Prostate gland (tissue), 2 donors: ENCODE measurements at regions of chr15 and their contacts with region 1.

Region 1: DNA sequence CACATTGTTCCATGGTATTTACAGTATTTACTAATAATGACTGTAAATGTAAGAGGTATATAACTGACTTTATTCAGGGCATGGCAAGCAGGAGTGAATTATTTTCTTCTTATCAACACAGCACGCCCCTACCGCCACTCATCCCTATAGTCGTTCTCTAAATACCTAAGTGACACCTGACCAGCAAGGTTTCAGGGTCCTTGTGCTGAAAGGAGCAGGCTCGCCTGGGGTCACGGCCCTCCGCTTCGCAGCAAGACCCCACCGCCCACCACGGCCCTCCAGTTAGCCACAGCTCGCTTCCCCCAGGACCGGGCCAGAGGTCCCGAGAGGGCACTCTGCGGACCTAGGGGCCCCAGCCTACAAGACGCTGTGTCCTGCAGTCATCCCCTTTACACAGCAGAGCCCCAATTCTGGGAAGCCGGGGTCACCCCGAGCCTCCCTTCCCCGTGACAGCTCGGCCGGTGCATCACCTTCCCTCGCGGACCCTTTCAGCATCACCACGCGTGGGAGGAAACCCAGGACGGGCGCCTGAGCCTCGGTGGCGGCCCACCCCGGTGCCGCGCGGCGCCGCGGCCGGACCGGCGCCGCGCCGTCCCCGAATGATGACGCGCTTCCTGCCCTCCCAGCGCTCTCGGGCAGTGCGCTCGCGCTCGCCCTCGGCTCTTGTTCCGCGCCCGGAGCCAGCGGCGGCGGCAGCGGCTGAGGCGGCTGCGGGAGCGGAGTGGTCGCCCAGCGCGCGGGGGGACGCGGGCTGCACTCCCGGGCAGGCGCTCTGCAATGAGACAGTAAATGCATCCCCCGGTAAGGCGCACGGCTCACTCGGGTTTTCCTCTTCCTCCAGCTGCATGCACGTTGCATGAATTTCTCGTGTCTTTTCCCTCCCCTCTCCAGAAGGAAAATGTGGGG is 225.1 kb upstream of the C2CD4B start:
- DNase-seq: peak; percentile 54
- H3K4me3 ChIP-seq: peak within 1 kb of the TSS; percentile 85 to 92
- H3K27ac ChIP-seq: peak within 1 kb of the TSS; percentile 69 to 70
- H3K4me1 ChIP-seq: no peaks in the 10 kb centered on the region
- H3K27me3 ChIP-seq: no peaks in the 10 kb centered on the region
- CTCF ChIP-seq: peak in 1 of 4 experiments; percentile 13
- POLR2A ChIP-seq: peak; percentile 41

Region 2: GRCh38 chr15:62649793-62650420 is 259.8 kb after region 1 on chr15:
- intact Hi-C with region 1: loop called (anchors 5 kb)
- DNase-seq: no peak
- H3K4me3 ChIP-seq: no peak overlapping the region
- H3K27ac ChIP-seq: no peak overlapping the region
- H3K4me1 ChIP-seq: no peaks in the 10 kb centered on the region
- H3K27me3 ChIP-seq: no peaks in the 10 kb centered on the region
- CTCF ChIP-seq: no peak
- POLR2A ChIP-seq: no peak

Region 3: GRCh38 chr15:62742409-62743171 is 352.5 kb after region 1 on chr15:
- intact Hi-C with region 1: loop called (anchors 5 kb)
- DNase-seq: peak; percentile 19
- H3K4me3 ChIP-seq: no peak overlapping the region
- H3K27ac ChIP-seq: peak overlapping the region in 1 of 2 donors; percentile 40
- H3K4me1 ChIP-seq: no peaks in the 10 kb centered on the region
- H3K27me3 ChIP-seq: no peaks in the 10 kb centered on the region
- CTCF ChIP-seq: peak; percentile 67 to 77 (median 72)
- POLR2A ChIP-seq: no peak